PC-3 (cell line): ENCODE measurements at regions of chr5 and their contacts with region 1.

Region 1: DNA sequence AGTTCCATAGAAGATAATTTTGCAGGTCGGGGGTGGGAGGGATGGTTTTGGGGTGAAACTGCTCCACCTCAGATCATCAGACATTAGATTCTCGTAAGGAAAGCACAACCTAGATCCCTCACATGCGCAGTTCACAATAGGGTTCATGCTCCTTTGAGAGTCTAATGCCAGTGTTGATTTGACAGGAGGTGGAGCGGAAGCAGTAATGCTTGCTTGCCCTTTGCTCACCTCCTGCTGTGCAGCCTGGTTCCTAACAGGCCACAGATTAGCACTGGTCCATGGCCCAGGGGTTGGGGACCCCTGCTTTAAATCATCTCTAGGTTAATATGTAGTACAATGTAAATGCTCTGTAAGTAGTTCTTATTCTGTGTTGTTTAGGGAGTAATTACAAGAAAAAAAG is 10.5 kb downstream of the SHISAL2B start:
- DNase-seq: no peak
- ATAC-seq: no peak
- H3K4me3 ChIP-seq: no peak overlapping the region
- H3K27ac ChIP-seq: no peak overlapping the region
- H3K4me1 ChIP-seq: peaks cover 8% of the 10 kb centered on the region; the same call in 1 of the 2 replicates
- H3K27me3 ChIP-seq: no peaks in the 10 kb centered on the region
- CTCF ChIP-seq: no peak

Region 2: DNA sequence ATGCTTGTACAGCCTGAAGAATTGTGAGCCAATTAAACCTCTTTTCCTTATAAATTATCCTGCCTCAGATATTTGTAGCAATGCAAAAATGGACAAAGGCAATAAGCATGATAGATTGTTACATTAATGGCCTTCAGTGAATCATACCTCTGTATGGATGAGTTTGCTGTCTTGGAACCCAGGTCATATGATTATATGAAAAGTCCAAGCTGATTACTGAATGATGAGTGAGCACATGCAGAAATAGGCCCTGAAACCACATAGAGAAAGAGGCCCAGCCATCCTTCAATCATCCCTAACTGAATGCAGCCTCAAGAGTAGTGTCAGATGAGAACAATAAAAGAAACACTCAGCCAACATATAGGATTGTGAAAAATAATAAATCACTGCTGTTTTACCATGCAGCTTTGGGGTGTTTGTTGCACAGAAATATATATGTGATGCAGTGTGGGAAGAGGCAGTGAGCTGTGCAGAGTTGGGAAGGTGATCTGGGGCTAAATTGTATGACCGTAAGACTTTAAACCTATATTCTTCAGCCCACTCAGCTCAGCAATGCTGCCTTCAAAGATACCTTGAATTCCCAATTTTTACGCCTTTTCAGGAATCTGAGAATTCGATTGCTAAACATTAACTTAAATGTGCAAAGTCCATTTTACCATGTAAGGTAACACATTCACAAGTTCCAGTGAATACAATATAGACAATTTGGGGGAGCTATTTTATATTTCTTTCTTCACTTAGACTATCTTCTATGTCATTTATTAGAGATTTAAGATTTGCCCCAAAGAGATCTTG is 46.8 kb before region 1 on chr5:
- CTCF ChIA-PET with region 1: interaction called, 3 read pairs
- POLR2A ChIA-PET with region 1: no interaction called
- intact Hi-C with region 1: loop called (anchors 5 kb)
- DNase-seq: no peak
- ATAC-seq: no peak
- H3K4me3 ChIP-seq: no peak overlapping the region
- H3K27ac ChIP-seq: no peak overlapping the region
- H3K4me1 ChIP-seq: no peaks in the 10 kb centered on the region
- H3K27me3 ChIP-seq: no peaks in the 10 kb centered on the region
- CTCF ChIP-seq: no peak